Activated CD4-positive, alpha-beta T cell treated with anti-CD3 and anti-CD28 coated beads for 36 hours (primary cell): ENCODE measurements at regions of chr20 and their contacts with region 1.

Region 1: DNA sequence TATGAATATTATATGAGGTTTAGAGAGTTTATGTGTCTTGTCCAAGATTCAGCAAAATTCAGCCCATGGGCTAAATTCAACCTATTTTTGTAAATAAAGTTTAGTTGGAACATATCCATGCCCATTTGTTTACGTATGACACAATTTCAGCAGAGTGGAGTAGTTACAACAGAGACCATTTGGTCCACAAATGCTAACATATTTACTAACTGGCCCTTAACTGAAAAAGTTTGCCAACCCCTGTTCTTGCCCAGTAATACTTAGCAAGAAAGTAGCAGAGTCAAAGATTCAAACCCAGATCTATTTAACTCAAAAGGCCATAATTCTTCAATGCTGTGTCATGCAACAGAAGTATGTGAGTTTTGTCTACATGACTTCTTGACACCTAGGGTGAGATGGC is 561.0 kb downstream of the PTPRT start:
- DNase-seq: no peak
- ATAC-seq: no peak
- H3K4me3 Mint-ChIP-seq: no peak overlapping the region
- H3K27ac Mint-ChIP-seq: no peak overlapping the region
- H3K4me1 Mint-ChIP-seq: no peaks in the 10 kb centered on the region
- H3K27me3 Mint-ChIP-seq: no peaks in the 10 kb centered on the region

Region 2: DNA sequence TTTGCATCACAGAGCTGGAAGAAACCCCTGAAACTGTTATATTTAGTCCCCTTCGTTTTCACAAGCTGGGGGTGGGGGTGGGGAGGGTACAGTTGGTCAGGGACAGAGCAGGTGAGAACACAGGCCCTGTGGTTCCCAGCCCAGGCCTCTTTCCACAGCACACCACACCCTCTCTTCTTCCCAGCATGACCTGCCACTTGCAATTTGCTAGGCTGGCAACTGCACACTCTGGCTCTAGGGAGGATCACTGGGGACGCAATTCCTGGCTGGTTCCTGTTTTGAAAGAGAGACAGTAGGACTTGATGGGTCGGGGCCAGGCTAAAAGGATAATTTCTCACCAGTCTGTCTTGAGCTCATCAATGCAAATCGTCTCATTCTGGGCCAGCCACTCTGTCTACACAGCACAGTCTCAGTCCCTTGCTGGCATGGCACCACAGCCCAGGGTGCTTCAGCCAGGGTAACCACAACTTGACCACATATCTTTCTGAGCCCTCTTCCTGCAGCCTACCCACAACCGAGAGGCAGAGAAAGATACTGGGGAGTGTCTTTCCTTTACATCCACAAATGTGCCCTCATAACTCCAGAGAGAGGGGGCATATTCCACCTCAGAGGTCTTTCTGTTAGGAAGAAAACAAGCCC is 1220.4 kb before region 1 on chr20:
- CTCF ChIA-PET with region 1: no interaction called
- POLR2A ChIA-PET with region 1: no interaction called
- intact Hi-C with region 1: loop called in 1 of 2 experiments (anchors 10 kb)
- DNase-seq: no peak
- ATAC-seq: peak; percentile 26
- H3K4me3 Mint-ChIP-seq: no peak overlapping the region
- H3K27ac Mint-ChIP-seq: no peak overlapping the region
- H3K4me1 Mint-ChIP-seq: peaks cover 30% of the 10 kb centered on the region
- H3K27me3 Mint-ChIP-seq: no peaks in the 10 kb centered on the region

Region 3: DNA sequence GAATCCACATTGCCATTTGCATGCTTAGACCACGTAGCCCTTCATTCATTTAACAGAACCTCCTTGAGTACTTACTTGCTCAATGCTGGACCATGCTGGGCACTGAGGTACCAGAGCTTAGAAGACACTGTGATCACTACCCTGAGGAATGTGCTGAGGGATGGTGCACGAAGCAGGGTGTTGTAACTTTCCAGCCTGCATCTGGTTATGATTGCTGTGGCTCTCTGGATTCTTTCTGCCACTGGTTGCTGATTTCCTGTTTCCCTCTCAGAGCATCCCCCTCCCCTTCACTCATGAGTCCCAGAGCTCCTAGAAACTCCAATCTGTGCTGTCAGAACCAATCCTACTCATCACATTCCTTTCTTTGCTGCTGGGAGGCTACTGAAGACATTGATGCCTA is 23.6 kb after region 1 on chr20:
- CTCF ChIA-PET with region 1: no interaction called
- POLR2A ChIA-PET with region 1: no interaction called
- intact Hi-C with region 1: no loop called
- DNase-seq: no peak
- ATAC-seq: no peak
- H3K4me3 Mint-ChIP-seq: no peak overlapping the region
- H3K27ac Mint-ChIP-seq: no peak overlapping the region
- H3K4me1 Mint-ChIP-seq: no peaks in the 10 kb centered on the region
- H3K27me3 Mint-ChIP-seq: no peaks in the 10 kb centered on the region

Region 4: GRCh38 chr20:42749556-42749955 is 120.9 kb after region 1 on chr20:
- CTCF ChIA-PET with region 1: no interaction called
- POLR2A ChIA-PET with region 1: no interaction called
- intact Hi-C with region 1: no loop called
- DNase-seq: no peak
- ATAC-seq: no peak
- H3K4me3 Mint-ChIP-seq: no peak overlapping the region
- H3K27ac Mint-ChIP-seq: no peak overlapping the region
- H3K4me1 Mint-ChIP-seq: no peaks in the 10 kb centered on the region
- H3K27me3 Mint-ChIP-seq: no peaks in the 10 kb centered on the region